ENCODE measurements at regions of chr3 and their contacts with region 1.

Region 1: DNA sequence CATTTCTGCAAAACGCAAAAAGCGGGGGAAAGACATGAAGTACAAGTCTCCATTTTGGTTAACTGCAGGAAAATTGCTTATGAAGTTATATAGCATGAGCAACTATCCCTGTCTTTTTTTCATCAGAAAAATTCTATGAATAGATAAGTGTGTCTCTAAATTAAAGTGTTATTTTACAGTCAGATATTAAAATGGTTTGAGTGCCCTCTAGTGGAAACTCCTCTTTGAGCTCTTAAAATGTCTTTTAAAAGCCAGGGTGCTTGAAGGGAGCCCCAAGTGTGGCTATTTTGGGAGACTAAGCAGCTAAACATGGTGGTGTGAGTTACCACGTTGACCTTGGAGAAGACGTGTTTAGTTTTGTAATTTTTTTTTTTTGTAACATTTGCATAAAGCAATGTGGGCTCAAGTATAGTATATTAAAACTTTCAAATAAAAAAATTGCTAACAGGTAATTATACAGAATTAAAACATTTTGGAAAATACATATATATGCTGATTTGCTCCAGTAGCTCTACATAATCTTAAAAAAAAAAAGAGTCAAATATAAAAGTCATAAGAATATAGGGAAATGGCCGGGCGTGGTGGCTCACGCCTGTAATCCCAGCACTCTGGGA is 77.2 kb downstream of the PPP2R3A start:
- DNase-seq: peak; percentile 70
- ATAC-seq: peak; percentile 84
- H3K4me3 ChIP-seq: no peak overlapping the region
- H3K27ac ChIP-seq: no peak overlapping the region
- H3K4me1 ChIP-seq: no peaks in the 10 kb centered on the region
- H3K27me3 ChIP-seq: no peaks in the 10 kb centered on the region
- CTCF ChIP-seq: peak; percentile 67
- POLR2A ChIP-seq: no peak
- RAD21 ChIP-seq: peak; percentile 72

Region 2: GRCh38 chr3:134794950-134795745 is 1247.6 kb before region 1 on chr3 and contains the start of gene EPHB1:
- CTCF ChIA-PET with region 1: interaction called, 3 read pairs
- POLR2A ChIA-PET with region 1: no interaction called
- dilution Hi-C with region 1: no loop called
- in situ Hi-C with region 1: loop called (anchors 25 kb)
- intact Hi-C with region 1: loop called (anchors 10 kb)
- DNase-seq: peak; percentile 87
- ATAC-seq: peak; percentile 93
- H3K4me3 ChIP-seq: peak within 1 kb of the TSS; percentile 47
- H3K27ac ChIP-seq: no peak within 1 kb of the TSS
- H3K4me1 ChIP-seq: peaks cover 1% of the 10 kb centered on the region; the same call in 1 of the 2 replicates
- H3K27me3 ChIP-seq: peaks cover 51% of the 10 kb centered on the region
- CTCF ChIP-seq: peak; percentile 80
- POLR2A ChIP-seq: no peak
- RAD21 ChIP-seq: peak; percentile 83
- total RNA-seq, gene EPHB1: under 0.01 and 0.36 TPM in 2 replicates

Region 3: DNA sequence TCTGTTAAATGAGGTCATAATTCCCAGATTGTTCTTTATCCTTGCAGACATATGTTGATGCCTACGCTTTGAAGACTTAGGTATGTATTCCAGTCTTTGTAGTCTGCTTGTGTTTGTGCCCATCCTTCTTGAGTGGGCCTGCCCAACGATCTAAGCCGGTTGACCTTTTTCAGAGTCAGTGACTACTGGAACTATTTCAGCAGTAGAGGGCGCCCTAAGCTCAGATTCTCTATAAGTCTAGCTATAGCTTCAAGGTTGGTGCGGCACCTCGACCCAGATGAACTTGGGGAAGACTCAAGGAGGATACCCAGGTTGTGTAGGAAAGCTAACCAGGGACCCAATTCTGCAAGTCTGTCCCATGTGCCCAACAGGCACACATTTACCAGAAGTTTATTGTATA is 306.0 kb before region 1 on chr3:
- CTCF ChIA-PET with region 1: no interaction called
- POLR2A ChIA-PET with region 1: no interaction called
- dilution Hi-C with region 1: no loop called
- in situ Hi-C with region 1: loop called (anchors 25 kb)
- intact Hi-C with region 1: loop called (anchors 5 kb)
- DNase-seq: peak; percentile 5
- ATAC-seq: no peak
- H3K4me3 ChIP-seq: no peak overlapping the region
- H3K27ac ChIP-seq: no peak overlapping the region
- H3K4me1 ChIP-seq: no peaks in the 10 kb centered on the region
- H3K27me3 ChIP-seq: no peaks in the 10 kb centered on the region
- CTCF ChIP-seq: peak; percentile 19; the same call in 1 of the 2 replicates
- POLR2A ChIP-seq: no peak
- RAD21 ChIP-seq: peak; percentile 36

Region 4: DNA sequence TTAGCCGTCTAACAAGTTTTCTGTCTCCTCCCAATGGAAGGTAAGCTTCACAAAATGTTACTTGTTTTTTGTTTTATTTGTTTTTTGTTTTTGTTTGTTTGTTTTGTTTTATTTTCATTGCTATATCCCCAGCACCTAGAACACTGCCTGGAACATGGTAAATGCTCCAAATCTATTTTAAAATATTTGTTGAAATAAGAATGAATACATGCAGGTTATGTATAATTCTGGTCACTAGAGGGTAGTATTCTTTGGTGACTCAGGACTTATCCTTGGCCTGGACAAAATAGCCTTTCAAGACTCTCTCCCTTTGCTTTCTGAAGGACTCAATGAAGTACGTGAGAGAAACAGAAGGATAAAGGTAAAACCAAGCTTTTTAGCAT is 124.1 kb before region 1 on chr3:
- CTCF ChIA-PET with region 1: interaction called, 41 read pairs
- POLR2A ChIA-PET with region 1: no interaction called
- dilution Hi-C with region 1: no loop called
- in situ Hi-C with region 1: loop called (anchors 5 kb)
- intact Hi-C with region 1: loop called (anchors 1 kb)
- DNase-seq: peak; percentile 67
- ATAC-seq: peak; percentile 90
- H3K4me3 ChIP-seq: no peak overlapping the region
- H3K27ac ChIP-seq: no peak overlapping the region
- H3K4me1 ChIP-seq: no peaks in the 10 kb centered on the region
- H3K27me3 ChIP-seq: no peaks in the 10 kb centered on the region
- CTCF ChIP-seq: peak; percentile 69
- POLR2A ChIP-seq: no peak
- RAD21 ChIP-seq: peak; percentile 67

Region 5: DNA sequence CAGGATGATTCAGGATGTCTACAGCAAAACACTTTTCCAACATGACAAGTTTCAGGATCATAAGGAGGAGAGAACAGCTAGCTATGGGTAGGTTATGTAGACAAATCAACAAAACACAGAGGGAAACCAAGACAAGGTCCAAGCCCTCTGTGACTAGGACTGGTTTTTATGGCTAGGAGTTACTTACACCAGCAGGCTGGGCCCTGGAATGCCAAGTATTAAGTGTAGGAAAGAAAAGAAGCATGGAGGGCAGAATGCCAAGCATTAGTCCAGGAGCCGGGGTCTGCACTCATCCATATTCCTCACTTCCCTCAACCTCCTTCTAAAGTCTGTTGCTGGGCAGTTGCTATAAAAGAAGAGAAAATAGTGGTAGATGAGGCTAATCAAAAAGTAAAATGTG is 112.5 kb before region 1 on chr3:
- CTCF ChIA-PET with region 1: interaction called, 10 read pairs
- POLR2A ChIA-PET with region 1: no interaction called
- dilution Hi-C with region 1: no loop called
- in situ Hi-C with region 1: no loop called
- intact Hi-C with region 1: no loop called
- DNase-seq: no peak
- ATAC-seq: peak; percentile 48
- H3K4me3 ChIP-seq: no peak overlapping the region
- H3K27ac ChIP-seq: no peak overlapping the region
- H3K4me1 ChIP-seq: 0 out of 2 replicates have a peak, but pooled peaks cover 2% of the 10 kb centered on the region
- H3K27me3 ChIP-seq: no peaks in the 10 kb centered on the region; the same call in 1 of the 2 replicates
- CTCF ChIP-seq: no peak
- POLR2A ChIP-seq: no peak
- RAD21 ChIP-seq: no peak

Region 6: GRCh38 chr3:135965506-135966270 is 77.0 kb before region 1 on chr3 and contains the start of gene PPP2R3A:
- CTCF ChIA-PET with region 1: interaction called, 19 read pairs
- POLR2A ChIA-PET with region 1: no interaction called
- dilution Hi-C with region 1: no loop called
- in situ Hi-C with region 1: no loop called
- intact Hi-C with region 1: loop called (anchors 1 kb)
- DNase-seq: peak; percentile 80
- ATAC-seq: peak; percentile 93
- H3K4me3 ChIP-seq: peak within 1 kb of the TSS; percentile 88
- H3K27ac ChIP-seq: peak within 1 kb of the TSS; percentile 88
- H3K4me1 ChIP-seq: peaks cover 6% of the 10 kb centered on the region
- H3K27me3 ChIP-seq: no peaks in the 10 kb centered on the region
- CTCF ChIP-seq: 0 out of 2 replicates have a peak, but pooled peaks have one; percentile 0
- POLR2A ChIP-seq: peak; percentile 78
- RAD21 ChIP-seq: no peak
- total RNA-seq, gene PPP2R3A: 37.3 and 46.7 TPM in 2 replicates

Measured in IMR-90 (cell line).